Naive thymus-derived CD4-positive, alpha-beta T cell (primary cell): ENCODE measurements at regions of chr5 and their contacts with region 1.

Region 1: GRCh38 chr5:115309751-115310370 is 13.4 kb upstream of the CCDC112 start:
- DNase-seq: peak in 6 of 9 donors; percentile 10 to 56 (median 46)
- ATAC-seq: peak; percentile 76
- H3K4me3 ChIP-seq: no peak overlapping the region
- H3K4me3 Mint-ChIP-seq: no peak overlapping the region
- H3K27ac ChIP-seq: no peak overlapping the region
- H3K27ac Mint-ChIP-seq: no peak overlapping the region
- H3K4me1 ChIP-seq: no peaks in the 10 kb centered on the region
- H3K4me1 Mint-ChIP-seq: no peaks in the 10 kb centered on the region
- H3K27me3 ChIP-seq: no peaks in the 10 kb centered on the region
- H3K27me3 Mint-ChIP-seq: peaks cover 19 to 47% (median 27%) of the 10 kb centered on the region in 5 donors

Region 2: DNA sequence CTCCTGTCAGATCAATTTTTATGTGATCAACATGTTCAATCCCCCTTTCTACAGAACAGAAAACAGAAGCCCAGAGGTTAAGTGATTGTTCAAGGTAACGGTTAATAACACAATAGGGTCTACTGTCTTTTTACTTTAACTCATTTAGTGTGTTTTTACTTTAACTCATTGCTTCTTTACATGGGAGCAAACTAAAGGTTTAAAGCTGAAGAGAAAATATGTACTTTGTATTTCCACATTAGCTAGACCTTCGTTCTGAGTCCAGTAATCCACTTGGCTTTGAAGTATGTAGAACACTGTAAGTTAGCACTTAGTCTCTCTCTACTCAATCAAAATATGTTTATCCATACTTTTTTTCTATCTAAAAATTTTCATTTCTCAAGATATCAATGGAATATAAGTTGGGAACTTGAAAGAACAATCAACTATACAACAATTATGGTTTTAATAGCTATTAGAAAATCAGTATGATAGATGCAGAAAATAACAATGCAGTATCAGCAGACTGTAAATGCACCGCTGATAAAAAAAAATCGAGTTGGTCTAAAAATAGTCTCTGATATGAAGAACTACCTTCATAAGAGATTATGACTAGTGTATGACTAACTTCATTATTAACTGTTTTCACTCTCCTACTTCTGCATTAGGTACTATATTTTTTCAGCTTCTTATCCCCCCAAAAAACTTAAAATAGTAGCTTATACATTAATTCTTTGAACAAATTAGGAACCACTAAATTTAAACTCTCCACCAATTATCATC is 67.8 kb before region 1 on chr5:
- CTCF ChIA-PET with region 1: no interaction called
- POLR2A ChIA-PET with region 1: no interaction called
- intact Hi-C with region 1: no loop called
- DNase-seq: no peak
- ATAC-seq: no peak
- H3K4me3 ChIP-seq: no peak overlapping the region
- H3K4me3 Mint-ChIP-seq: no peak overlapping the region
- H3K27ac ChIP-seq: no peak overlapping the region
- H3K27ac Mint-ChIP-seq: no peak overlapping the region
- H3K4me1 ChIP-seq: no peaks in the 10 kb centered on the region
- H3K4me1 Mint-ChIP-seq: peaks cover 0 to 18% (median 6%) of the 10 kb centered on the region in 7 donors
- H3K27me3 ChIP-seq: no peaks in the 10 kb centered on the region
- H3K27me3 Mint-ChIP-seq: no peaks in the 10 kb centered on the region

Region 3: DNA sequence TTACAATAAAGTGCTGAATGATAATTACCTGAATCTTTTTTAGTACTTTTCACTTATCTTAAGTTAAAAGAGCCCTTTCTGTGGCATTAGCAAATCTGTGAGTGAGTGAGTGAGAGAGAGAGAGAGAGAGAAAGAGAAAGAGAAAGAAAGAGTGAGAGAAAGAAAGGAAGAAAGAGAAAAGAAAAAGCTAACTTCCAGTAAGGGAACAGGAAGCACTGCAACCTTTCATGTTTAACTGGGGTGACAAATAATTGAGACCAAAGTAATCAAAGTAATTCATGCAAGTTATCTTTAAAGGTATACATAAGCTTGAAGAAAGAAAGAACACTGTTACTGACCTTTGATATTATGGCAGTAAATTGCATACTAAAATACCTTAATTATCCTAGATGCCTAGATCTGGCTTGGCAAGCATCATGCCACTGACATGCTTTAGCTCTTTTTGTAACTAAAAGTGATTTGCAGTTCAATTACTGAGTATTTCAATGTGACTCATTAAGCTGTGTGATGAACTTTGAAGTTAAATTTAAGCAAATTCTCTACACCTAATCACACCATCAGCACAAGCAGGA is 213.1 kb after region 1 on chr5:
- CTCF ChIA-PET with region 1: no interaction called
- POLR2A ChIA-PET with region 1: no interaction called
- intact Hi-C with region 1: no loop called
- DNase-seq: no peak
- ATAC-seq: no peak
- H3K4me3 ChIP-seq: no peak overlapping the region
- H3K4me3 Mint-ChIP-seq: peak overlapping the region in 7 of 10 donors; percentile 8 to 58 (median 41)
- H3K27ac ChIP-seq: no peak overlapping the region
- H3K27ac Mint-ChIP-seq: peak overlapping the region in 8 of 9 donors; percentile 10 to 81 (median 37)
- H3K4me1 ChIP-seq: peaks cover 11 to 13% of the 10 kb centered on the region in 2 donors
- H3K4me1 Mint-ChIP-seq: peaks cover 22 to 51% (median 39%) of the 10 kb centered on the region in 7 donors
- H3K27me3 ChIP-seq: no peaks in the 10 kb centered on the region
- H3K27me3 Mint-ChIP-seq: no peaks in the 10 kb centered on the region

Region 4: GRCh38 chr5:115579747-115580173 is 269.9 kb after region 1 on chr5:
- CTCF ChIA-PET with region 1: interaction called, 159 read pairs
- POLR2A ChIA-PET with region 1: no interaction called
- intact Hi-C with region 1: loop called (anchors 1 kb)
- DNase-seq: no peak
- ATAC-seq: no peak
- H3K4me3 ChIP-seq: no peak overlapping the region
- H3K4me3 Mint-ChIP-seq: no peak overlapping the region
- H3K27ac ChIP-seq: no peak overlapping the region
- H3K27ac Mint-ChIP-seq: no peak overlapping the region
- H3K4me1 ChIP-seq: no peaks in the 10 kb centered on the region
- H3K4me1 Mint-ChIP-seq: no peaks in the 10 kb centered on the region
- H3K27me3 ChIP-seq: no peaks in the 10 kb centered on the region
- H3K27me3 Mint-ChIP-seq: peaks cover 0 to 4% (median 0%) of the 10 kb centered on the region in 5 donors

Region 5: DNA sequence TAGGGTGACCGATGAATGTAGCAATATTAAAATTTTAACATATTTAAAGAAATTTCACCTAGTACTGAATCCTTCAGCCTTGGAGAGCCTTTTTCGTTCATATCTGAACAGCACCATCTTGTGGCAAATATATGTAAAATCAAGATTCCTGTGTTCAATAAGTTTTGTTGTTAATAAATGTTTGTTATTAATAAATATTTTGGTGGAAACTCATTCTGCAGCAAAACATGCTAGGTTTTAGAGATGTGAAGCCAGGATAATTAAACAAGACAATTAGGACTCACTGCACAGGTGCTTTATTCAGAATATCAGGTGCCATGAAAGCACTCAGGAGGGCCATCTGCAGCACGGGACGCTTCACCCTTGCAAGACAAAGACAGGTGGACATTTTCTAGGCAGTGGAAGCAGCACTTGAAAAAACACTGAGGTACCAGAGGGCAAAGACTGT is 276.8 kb after region 1 on chr5:
- CTCF ChIA-PET with region 1: interaction called, 5 read pairs
- POLR2A ChIA-PET with region 1: no interaction called
- intact Hi-C with region 1: loop called (anchors 1 kb)
- DNase-seq: peak in 6 of 9 donors; percentile 13 to 38 (median 27)
- ATAC-seq: peak; percentile 56
- H3K4me3 ChIP-seq: no peak overlapping the region
- H3K4me3 Mint-ChIP-seq: no peak overlapping the region
- H3K27ac ChIP-seq: no peak overlapping the region
- H3K27ac Mint-ChIP-seq: no peak overlapping the region
- H3K4me1 ChIP-seq: no peaks in the 10 kb centered on the region
- H3K4me1 Mint-ChIP-seq: no peaks in the 10 kb centered on the region
- H3K27me3 ChIP-seq: no peaks in the 10 kb centered on the region
- H3K27me3 Mint-ChIP-seq: peaks cover 0 to 5% (median 0%) of the 10 kb centered on the region in 5 donors